Activated B cell treated with CpG ODN at 0.5 μM for 24 hours (primary cell): ENCODE measurements at regions of chr3 and their contacts with region 1.

Region 1: GRCh38 chr3:184135149-184135910 is at the start of gene EIF2B5:
- DNase-seq: peak; percentile 80
- ATAC-seq: peak; percentile 90
- H3K4me3 Mint-ChIP-seq: peak within 1 kb of the TSS; percentile 98
- H3K27ac Mint-ChIP-seq: peak within 1 kb of the TSS; percentile 96
- H3K4me1 Mint-ChIP-seq: peaks cover 33% of the 10 kb centered on the region
- H3K27me3 Mint-ChIP-seq: no peaks in the 10 kb centered on the region
- CTCF ChIP-seq: no peak
- total RNA-seq, gene EIF2B5: 72.0 and 74.2 TPM in 2 replicates

Region 2: GRCh38 chr3:183895296-183895695 is 240.0 kb before region 1 on chr3:
- CTCF ChIA-PET with region 1: interaction called, 3 read pairs
- POLR2A ChIA-PET with region 1: interaction called, 3 read pairs
- intact Hi-C with region 1: loop called (anchors 1 kb)
- DNase-seq: no peak
- ATAC-seq: peak; percentile 97
- H3K4me3 Mint-ChIP-seq: no peak overlapping the region
- H3K27ac Mint-ChIP-seq: no peak overlapping the region
- H3K4me1 Mint-ChIP-seq: peaks cover 4% of the 10 kb centered on the region
- H3K27me3 Mint-ChIP-seq: peaks cover 22% of the 10 kb centered on the region
- CTCF ChIP-seq: no peak

Region 3: DNA sequence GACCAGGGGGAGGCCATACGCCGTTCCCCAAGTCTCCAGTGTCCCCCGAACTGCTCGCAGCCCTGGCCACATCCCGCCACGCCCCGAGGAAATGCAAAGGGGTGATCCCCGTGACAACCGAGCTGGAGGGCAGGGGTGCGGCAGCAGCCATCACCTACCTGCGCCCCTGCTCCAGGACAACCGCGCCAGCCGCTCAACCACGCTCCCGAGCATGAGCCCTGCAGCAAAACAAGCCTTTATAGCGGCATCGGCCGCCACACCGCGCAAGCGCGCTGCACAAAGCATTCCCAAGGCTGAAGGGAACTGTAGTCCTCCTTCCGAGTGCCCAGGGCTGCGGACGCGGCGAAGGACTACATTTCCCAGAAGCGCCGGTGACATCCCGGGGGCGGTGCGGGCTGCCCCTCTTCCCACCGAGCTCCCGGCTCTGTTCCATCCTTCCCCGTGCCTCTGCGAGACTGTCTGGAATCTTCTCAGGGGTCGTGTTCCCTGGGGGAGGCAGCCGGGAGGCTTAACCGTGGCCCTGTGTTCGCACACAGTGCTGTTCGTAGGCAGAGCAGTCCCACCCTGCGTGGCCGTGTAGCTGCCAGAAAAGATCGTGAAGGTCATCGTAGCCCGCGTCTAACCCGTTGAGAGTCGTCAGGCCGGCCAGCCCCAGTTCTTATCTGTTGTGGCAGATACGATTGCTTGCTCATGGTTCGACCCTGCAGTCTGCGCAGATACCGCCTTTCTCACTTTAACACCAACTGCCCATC is 117.5 kb before region 1 on chr3 and contains the start of gene ABCC5:
- CTCF ChIA-PET with region 1: no interaction called
- POLR2A ChIA-PET with region 1: interaction called, 7 read pairs
- intact Hi-C with region 1: loop called (anchors 1 kb)
- DNase-seq: peak; percentile 70
- ATAC-seq: peak; percentile 96
- H3K4me3 Mint-ChIP-seq: peak within 1 kb of the TSS; percentile 100
- H3K27ac Mint-ChIP-seq: peak within 1 kb of the TSS; percentile 84
- H3K4me1 Mint-ChIP-seq: peaks cover 13% of the 10 kb centered on the region
- H3K27me3 Mint-ChIP-seq: peaks cover 12% of the 10 kb centered on the region
- CTCF ChIP-seq: peak; percentile 7
- total RNA-seq, gene ABCC5: 10.6 and 11.1 TPM in 2 replicates

Region 4: GRCh38 chr3:184174646-184175492 is 39.5 kb after region 1 on chr3 and contains the start of gene AP2M1:
- CTCF ChIA-PET with region 1: no interaction called
- POLR2A ChIA-PET with region 1: interaction called, 8 read pairs
- intact Hi-C with region 1: loop called (anchors 1 kb)
- DNase-seq: peak; percentile 99
- ATAC-seq: peak; percentile 97
- H3K4me3 Mint-ChIP-seq: peak within 1 kb of the TSS; percentile 90
- H3K27ac Mint-ChIP-seq: peak within 1 kb of the TSS; percentile 75
- H3K4me1 Mint-ChIP-seq: peaks cover 37% of the 10 kb centered on the region
- H3K27me3 Mint-ChIP-seq: no peaks in the 10 kb centered on the region
- CTCF ChIP-seq: no peak
- total RNA-seq, gene AP2M1: 169 and 177 TPM in 2 replicates

Region 5: DNA sequence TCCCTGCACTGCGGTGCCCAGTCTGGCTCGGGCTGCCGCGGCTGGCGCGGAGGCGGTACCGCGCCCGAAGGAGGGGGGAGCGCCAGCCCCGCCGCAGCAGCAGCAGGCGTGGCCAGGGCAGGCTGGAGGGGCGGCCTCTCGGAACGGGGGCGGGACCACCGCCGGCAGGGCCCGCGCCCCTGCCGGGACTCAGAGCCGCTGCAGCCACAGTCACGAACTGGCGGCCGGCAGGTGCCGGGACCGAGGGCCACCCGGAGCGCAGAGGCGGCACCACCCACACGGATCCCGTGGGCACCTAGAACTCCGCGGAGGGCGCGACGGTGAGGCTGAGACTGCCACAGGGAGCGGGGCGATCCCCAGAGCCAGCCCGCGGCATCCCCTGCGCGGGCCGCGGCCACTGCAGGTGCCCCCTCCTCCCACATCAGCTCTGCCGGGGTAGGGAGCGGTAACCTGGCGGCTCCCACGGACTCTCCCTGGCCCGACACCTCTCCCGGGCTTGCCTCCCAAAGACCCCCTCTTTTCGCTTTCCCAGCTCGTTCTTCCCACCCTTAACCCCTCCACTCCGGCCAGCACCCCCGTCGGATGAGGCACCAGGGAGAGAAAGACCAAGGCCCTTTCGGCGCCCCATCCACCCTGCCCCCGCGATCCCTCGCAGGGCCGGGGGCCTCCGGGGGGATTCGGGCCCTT is 94.2 kb after region 1 on chr3 and contains the start of gene VWA5B2:
- CTCF ChIA-PET with region 1: no interaction called
- POLR2A ChIA-PET with region 1: no interaction called
- intact Hi-C with region 1: loop called (anchors 1 kb)
- DNase-seq: peak; percentile 79
- ATAC-seq: peak; percentile 97
- H3K4me3 Mint-ChIP-seq: peak within 1 kb of the TSS; percentile 77
- H3K27ac Mint-ChIP-seq: no peak within 1 kb of the TSS
- H3K4me1 Mint-ChIP-seq: peaks cover 15% of the 10 kb centered on the region
- H3K27me3 Mint-ChIP-seq: peaks cover 45% of the 10 kb centered on the region
- CTCF ChIP-seq: no peak
- total RNA-seq, gene VWA5B2: 0.42 and 0.76 TPM in 2 replicates